Activated CD4-positive, alpha-beta T cell treated with anti-CD3 and anti-CD28 coated beads for 36 hours (primary cell): ENCODE measurements at regions of chr3 and their contacts with region 1.

Region 1: GRCh38 chr3:7876741-7877297 is 624.8 kb upstream of the LMCD1 start:
- DNase-seq: peak; percentile 46
- ATAC-seq: peak; percentile 84
- H3K4me3 Mint-ChIP-seq: peak overlapping the region; percentile 16
- H3K27ac Mint-ChIP-seq: peak overlapping the region; percentile 63
- H3K4me1 Mint-ChIP-seq: peaks cover 41% of the 10 kb centered on the region
- H3K27me3 Mint-ChIP-seq: no peaks in the 10 kb centered on the region

Region 2: GRCh38 chr3:7917443-7918151 is 40.8 kb after region 1 on chr3:
- CTCF ChIA-PET with region 1: no interaction called
- POLR2A ChIA-PET with region 1: no interaction called
- intact Hi-C with region 1: loop called (anchors 2 to 5 kb)
- DNase-seq: peak; percentile 47
- ATAC-seq: peak; percentile 97
- H3K4me3 Mint-ChIP-seq: no peak overlapping the region
- H3K27ac Mint-ChIP-seq: no peak overlapping the region
- H3K4me1 Mint-ChIP-seq: peaks cover 18% of the 10 kb centered on the region
- H3K27me3 Mint-ChIP-seq: no peaks in the 10 kb centered on the region